Kidney (tissue), 22 donors: ENCODE measurements at regions of chr18 and their contacts with region 1.

Region 1: DNA sequence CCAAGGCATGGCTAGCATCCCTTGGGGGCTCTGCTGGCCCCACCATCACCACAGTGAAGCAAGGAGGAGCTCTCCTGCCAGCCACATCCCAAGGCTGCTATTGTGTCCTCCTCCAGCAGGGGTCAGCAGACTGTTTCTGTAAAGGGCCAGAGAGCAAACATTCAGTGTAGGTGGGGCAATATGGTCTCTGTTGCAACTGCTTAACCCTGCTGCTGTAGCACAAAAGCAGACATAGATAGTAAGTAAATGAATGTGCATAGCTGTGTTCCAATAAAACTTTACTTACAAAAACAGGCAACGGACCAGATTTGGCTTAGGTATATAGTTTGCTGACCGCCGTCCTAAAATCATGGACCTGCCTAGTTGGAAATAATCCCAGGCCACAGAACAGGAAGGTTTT is 36.4 kb upstream of the ZBTB7C start:
- DNase-seq: peak in 4 of 5 donors; percentile 80 to 88 (median 81)
- H3K4me3 ChIP-seq: no peak overlapping the region
- H3K27ac ChIP-seq: no peak overlapping the region
- H3K4me1 ChIP-seq: peaks cover 0 to 7% (median 5%) of the 10 kb centered on the region in 3 donors
- H3K27me3 ChIP-seq: no peaks in the 10 kb centered on the region
- CTCF ChIP-seq: peak; percentile 92

Region 2: DNA sequence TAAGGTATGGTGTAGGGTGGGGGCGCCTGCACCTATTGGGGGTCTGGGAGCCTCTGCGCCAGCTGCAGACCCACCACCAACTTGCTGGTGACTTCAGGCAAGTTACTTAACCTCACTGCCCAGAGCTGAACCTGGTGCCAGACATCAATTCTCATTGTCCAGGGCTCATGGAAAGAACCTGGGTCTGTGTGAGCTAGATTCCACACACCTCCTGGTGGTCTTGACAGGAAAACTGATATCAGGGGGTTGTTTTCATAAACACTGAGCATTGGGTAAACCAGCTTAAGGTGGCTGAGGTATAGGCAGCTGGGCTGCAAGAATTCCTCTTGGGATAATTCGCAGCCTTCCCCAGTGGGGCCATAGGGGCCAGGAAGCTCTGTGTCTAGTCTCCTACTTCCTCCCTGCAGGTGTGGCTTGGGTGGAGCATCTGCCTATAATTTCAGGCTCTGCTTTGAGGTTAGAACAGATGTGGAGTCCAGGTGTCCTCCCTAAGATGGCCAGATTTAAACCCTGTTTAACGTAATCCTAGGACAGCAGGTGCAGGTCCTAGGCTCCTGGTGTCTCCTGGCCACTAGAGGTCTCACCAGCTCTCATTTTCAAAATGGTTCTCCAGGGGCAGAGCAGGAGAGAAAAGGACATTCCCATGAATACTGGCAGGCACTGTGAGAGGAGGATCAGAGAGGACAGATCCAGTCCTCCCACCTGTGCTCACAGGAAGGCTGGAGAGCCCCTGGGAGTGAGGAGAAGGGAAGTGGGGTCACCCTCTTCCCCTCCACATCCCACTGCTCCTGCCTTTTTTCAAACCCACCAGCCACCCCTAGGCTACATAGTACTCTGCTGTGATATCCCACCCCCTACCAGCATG is 414.7 kb before region 1 on chr18:
- intact Hi-C with region 1: loop called (anchors 5 kb)
- DNase-seq: peak; percentile 49 to 93 (median 81)
- H3K4me3 ChIP-seq: no peak overlapping the region
- H3K27ac ChIP-seq: no peak overlapping the region
- H3K4me1 ChIP-seq: peaks cover 0 to 12% (median 5%) of the 10 kb centered on the region in 3 donors
- H3K27me3 ChIP-seq: no peaks in the 10 kb centered on the region
- CTCF ChIP-seq: peak; percentile 80